ENCODE measurements at regions of chr18 and their contacts with region 1.

Region 1: DNA sequence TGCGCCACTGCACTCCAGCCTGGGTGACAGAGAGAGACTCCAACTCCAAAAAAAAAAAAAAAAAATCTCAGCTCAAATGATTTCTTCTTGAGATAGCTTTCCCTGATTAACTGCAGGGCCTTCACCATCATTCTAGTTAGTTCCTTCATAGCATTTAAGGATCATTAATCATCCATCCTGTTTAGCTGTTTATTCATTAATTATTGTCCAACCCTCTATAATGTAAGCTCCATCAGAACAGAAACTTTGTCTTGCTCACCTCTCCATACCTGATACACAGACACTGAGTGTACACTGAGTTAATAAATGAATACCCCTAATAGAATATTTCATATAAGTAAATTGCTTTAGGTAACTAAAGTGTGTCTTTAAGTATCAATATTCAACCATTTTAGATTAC is 42.2 kb upstream of the ENOSF1 start:
- DNase-seq: no peak
- ATAC-seq: no peak
- H3K4me3 ChIP-seq: no peak overlapping the region
- H3K27ac ChIP-seq: no peak overlapping the region
- H3K4me1 ChIP-seq: no peaks in the 10 kb centered on the region
- H3K27me3 ChIP-seq: no peaks in the 10 kb centered on the region
- CTCF ChIP-seq: no peak

Region 2: GRCh38 chr18:407626-408224 is 346.9 kb before region 1 on chr18:
- CTCF ChIA-PET with region 1: no interaction called
- POLR2A ChIA-PET with region 1: no interaction called
- intact Hi-C with region 1: no loop called
- DNase-seq: peak; percentile 38
- ATAC-seq: no peak
- H3K4me3 ChIP-seq: no peak overlapping the region
- H3K27ac ChIP-seq: no peak overlapping the region
- H3K4me1 ChIP-seq: no peaks in the 10 kb centered on the region
- H3K27me3 ChIP-seq: peaks cover 7% of the 10 kb centered on the region
- CTCF ChIP-seq: no peak

Region 3: DNA sequence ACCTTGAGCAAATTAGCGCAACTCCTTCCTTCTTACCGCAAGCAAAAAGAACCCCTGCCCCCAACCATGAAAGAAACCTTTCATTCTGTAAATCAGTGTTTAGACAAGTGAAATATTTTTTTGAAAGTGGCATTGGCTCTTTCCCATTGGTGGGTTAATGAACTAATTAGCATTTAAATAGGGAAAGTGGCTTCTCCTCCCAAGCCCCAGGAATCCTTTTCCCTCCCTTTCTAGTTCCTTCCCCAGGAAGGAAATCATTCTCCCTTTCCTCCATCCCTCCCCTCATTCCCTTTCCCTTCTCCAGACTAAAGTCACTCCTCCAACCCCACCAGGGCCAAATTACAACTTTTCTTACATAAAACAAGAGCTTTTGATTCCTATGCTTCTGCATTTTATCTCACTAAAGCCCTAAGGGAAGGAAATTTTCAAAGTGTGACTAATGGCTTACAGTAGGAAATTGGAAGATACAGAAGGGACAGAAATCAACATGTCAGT is 120.1 kb before region 1 on chr18:
- CTCF ChIA-PET with region 1: no interaction called
- POLR2A ChIA-PET with region 1: no interaction called
- intact Hi-C with region 1: no loop called
- DNase-seq: peak; percentile 51
- ATAC-seq: peak; percentile 72
- H3K4me3 ChIP-seq: no peak overlapping the region
- H3K27ac ChIP-seq: no peak overlapping the region
- H3K4me1 ChIP-seq: peaks cover 9% of the 10 kb centered on the region
- H3K27me3 ChIP-seq: no peaks in the 10 kb centered on the region
- CTCF ChIP-seq: no peak

Region 4: DNA sequence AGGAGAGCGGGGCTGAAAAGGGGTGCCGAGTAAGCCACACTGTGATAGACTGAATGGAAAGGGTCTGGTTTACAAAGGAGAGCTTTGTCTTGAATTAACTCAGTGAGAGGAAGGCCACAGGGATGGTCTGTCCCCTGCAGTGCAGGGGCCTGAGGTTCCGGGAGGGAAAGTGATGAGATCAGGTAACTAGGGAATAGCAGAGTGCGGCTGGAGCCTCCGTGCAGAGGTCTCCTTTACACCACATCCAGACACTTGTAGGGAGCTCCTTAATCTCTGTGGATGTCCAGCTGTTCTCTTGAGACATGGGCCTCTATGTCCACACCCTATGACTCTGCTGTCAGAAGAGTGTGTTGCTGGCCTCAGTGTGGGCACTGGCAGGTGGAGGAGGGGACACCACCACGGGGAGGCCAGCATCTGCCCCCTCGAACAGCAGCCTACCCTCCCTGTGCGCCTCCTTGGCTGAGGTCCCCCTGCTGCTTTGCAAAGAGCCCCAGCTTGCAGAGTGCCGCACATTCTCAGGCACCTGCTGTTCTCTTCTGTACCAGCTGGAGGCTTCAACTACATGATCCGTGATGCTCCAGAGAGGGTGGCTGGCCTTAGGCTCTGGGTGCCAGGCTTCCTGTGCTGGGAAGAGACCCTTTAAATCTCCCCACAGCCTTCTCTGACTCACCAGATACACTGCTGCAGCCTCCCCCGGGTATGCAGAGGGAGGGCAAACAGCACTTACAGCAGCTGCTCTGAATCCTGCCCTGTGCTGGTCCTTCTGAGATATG is 68.1 kb before region 1 on chr18:
- CTCF ChIA-PET with region 1: no interaction called
- POLR2A ChIA-PET with region 1: no interaction called
- intact Hi-C with region 1: no loop called
- DNase-seq: no peak
- ATAC-seq: peak; percentile 39
- H3K4me3 ChIP-seq: no peak overlapping the region
- H3K27ac ChIP-seq: no peak overlapping the region
- H3K4me1 ChIP-seq: peaks cover 5% of the 10 kb centered on the region; the same call in 1 of the 2 replicates
- H3K27me3 ChIP-seq: no peaks in the 10 kb centered on the region
- CTCF ChIP-seq: no peak

Region 5: DNA sequence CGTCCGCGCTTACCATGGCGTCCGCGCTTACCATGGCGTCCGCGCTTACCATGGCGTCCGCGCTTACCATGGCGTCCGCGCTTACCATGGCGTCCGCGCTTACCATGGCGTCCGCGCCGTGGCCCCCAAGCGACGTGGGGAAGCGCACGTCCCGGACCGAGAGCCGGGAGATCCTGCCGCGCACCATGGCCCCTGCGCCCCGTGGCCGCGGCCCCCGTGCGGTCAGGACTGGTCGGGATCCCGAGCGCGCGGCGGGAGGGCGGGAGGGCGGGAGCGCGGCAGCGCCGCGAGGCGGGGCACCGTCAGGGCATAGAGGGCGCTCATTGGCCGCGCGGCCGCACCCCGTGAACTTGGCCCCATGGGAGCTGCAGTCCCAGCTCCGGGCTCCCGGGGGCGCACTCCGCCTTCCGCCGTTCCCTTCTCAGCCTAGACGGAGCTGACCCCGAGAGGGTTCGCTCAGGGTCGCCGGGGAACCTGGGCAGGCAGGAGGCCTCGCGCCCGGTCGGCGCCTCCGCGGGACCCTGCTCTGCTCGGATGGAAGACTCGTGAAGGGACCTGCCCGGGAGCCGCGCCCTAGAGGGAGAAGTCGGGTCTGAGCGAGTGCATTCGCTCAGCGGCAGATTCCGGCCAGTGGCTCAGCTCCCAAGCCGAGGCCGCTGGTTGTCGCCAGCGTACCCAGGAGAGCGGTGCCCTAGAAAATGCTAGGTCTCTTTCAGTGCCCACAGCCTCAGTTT is 42.1 kb before region 1 on chr18 and contains the start of gene ENOSF1:
- CTCF ChIA-PET with region 1: no interaction called
- POLR2A ChIA-PET with region 1: no interaction called
- intact Hi-C with region 1: no loop called
- DNase-seq: peak; percentile 84
- ATAC-seq: peak; percentile 84
- H3K4me3 ChIP-seq: peak within 1 kb of the TSS; percentile 80
- H3K27ac ChIP-seq: peak within 1 kb of the TSS; percentile 63
- H3K4me1 ChIP-seq: peaks cover 13% of the 10 kb centered on the region
- H3K27me3 ChIP-seq: no peaks in the 10 kb centered on the region
- CTCF ChIP-seq: peak; percentile 66
- total RNA-seq, gene ENOSF1: 44.2 and 61.0 TPM in 2 replicates

Region 6: GRCh38 chr18:805008-805754 is 50.5 kb after region 1 on chr18:
- CTCF ChIA-PET with region 1: no interaction called
- POLR2A ChIA-PET with region 1: interaction called, 26 read pairs
- intact Hi-C with region 1: no loop called
- DNase-seq: no peak
- ATAC-seq: no peak
- H3K4me3 ChIP-seq: no peak overlapping the region
- H3K27ac ChIP-seq: no peak overlapping the region
- H3K4me1 ChIP-seq: peaks cover 7% of the 10 kb centered on the region
- H3K27me3 ChIP-seq: no peaks in the 10 kb centered on the region
- CTCF ChIP-seq: no peak